ENCODE measurements at regions of chr17 and their contacts with region 1.

Region 1: DNA sequence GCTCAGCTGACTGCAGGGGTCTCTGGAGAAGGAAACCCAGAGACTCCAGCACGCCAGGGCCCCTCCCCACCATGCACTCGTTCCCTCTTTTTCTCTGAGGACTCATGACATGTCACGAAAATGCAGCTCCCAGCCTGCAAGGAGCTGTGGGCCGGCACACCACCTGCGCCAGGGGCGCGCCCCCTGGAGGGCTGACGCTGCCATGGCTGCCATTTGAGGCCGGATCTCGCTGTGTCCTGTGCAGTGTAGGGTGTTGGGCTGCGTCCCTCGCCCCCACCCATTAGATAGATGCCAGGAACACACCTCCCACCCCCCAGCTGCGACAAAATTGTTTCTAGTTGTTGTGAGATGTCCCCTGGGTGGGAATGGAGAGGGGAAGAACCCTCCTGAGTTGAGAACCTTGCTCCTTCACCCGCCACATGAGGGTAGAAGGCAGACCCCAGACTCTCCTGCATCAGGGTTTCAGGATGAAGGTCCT is 8.2 kb downstream of the SYNGR2 start:
- DNase-seq: no peak
- ATAC-seq: peak; percentile 68
- H3K4me3 ChIP-seq: no peak overlapping the region
- H3K27ac ChIP-seq: no peak overlapping the region
- H3K4me1 ChIP-seq: peaks cover 59% of the 10 kb centered on the region
- H3K27me3 ChIP-seq: no peaks in the 10 kb centered on the region
- CTCF ChIP-seq: peak; percentile 94 to 99 (median 99); a peak in 5 of 6 replicates
- EP300 ChIP-seq: no peak
- POLR2A ChIP-seq: peak; percentile 75
- RAD21 ChIP-seq: peak; percentile 82

Region 2: GRCh38 chr17:78112518-78113226 is 63.9 kb before region 1 on chr17:
- CTCF ChIA-PET with region 1: interaction called, 46 read pairs
- POLR2A ChIA-PET with region 1: interaction called, 6 read pairs
- RAD21 ChIA-PET with region 1: interaction called, 16 read pairs
- SMC1A ChIA-PET with region 1: interaction called, 10 read pairs
- in situ Hi-C with region 1: loop called (anchors 5 kb)
- intact Hi-C with region 1: loop called (anchors 1 kb)
- DNase-seq: no peak
- ATAC-seq: peak; percentile 84
- H3K4me3 ChIP-seq: no peak overlapping the region
- H3K27ac ChIP-seq: no peak overlapping the region; the same call in 1 of the 2 replicates
- H3K4me1 ChIP-seq: peaks cover 27% of the 10 kb centered on the region
- H3K27me3 ChIP-seq: no peaks in the 10 kb centered on the region
- CTCF ChIP-seq: peak; percentile 93 to 99 (median 96); a peak in 5 of 6 replicates
- EP300 ChIP-seq: no peak
- POLR2A ChIP-seq: peak; percentile 77
- RAD21 ChIP-seq: peak; percentile 96

Region 3: DNA sequence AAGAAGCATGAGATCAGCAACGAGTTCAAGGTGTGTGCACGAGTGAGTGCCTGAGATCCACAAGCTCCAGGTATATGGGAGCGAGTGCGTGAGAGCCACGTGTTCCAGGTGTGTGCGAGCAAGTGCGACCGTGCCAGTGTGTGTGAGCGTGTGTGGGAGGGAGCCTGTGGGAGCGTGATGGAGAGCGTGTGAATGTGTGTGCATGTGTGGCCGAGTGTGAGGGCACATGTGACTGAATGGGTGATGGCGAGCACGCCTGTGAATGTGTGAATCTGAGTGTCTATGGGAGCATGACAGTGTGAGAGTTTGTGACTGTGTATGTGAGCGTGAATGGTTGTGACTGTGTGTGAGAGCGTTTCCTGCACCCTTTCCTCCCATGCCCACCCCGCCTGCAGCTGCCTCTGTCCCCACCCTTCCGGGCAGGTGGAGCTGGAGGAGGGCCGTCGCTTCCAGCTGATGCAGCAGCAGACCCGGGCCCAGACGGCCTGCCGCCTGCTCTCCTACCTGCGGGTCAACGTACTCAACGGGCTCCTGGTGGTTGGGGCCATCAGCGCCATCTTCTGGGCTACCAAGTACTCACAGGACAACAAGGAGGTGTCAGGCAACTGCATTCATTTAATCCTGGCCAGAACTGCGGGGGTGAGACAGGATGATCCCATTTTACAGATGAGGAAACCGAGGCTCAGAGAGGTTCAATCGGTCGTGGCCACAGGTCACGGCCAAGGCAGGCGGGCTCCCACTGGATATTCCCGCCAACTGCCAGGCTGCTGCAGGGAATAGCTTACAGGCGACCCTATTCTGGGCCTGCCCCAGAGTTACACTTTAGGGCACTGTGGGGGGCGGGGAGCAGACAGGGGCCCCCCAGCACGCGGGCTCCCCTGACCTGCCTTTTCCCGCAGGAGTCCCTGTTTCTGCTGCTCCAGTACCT is 42.4 kb before region 1 on chr17:
- CTCF ChIA-PET with region 1: interaction called, 132 read pairs
- POLR2A ChIA-PET with region 1: interaction called, 85 read pairs
- RAD21 ChIA-PET with region 1: interaction called, 83 read pairs
- SMC1A ChIA-PET with region 1: interaction called, 51 read pairs
- in situ Hi-C with region 1: no loop called
- intact Hi-C with region 1: loop called (anchors 2 kb)
- DNase-seq: no peak
- ATAC-seq: peak; percentile 34
- H3K4me3 ChIP-seq: peak overlapping the region; percentile 94
- H3K27ac ChIP-seq: peak overlapping the region; percentile 93
- H3K4me1 ChIP-seq: peaks cover 64% of the 10 kb centered on the region
- H3K27me3 ChIP-seq: no peaks in the 10 kb centered on the region
- CTCF ChIP-seq: peak; percentile 76 to 78 (median 76)
- EP300 ChIP-seq: peak in 1 of 2 experiments; percentile 58; a peak in 1 of 4 replicates
- POLR2A ChIP-seq: peak; percentile 76
- RAD21 ChIP-seq: peak; percentile 75

Region 4: GRCh38 chr17:78154903-78155811 is 21.4 kb before region 1 on chr17:
- CTCF ChIA-PET with region 1: interaction called, 14 read pairs
- POLR2A ChIA-PET with region 1: interaction called, 20 read pairs
- RAD21 ChIA-PET with region 1: interaction called, 9 read pairs
- SMC1A ChIA-PET with region 1: interaction called, 20 read pairs
- in situ Hi-C with region 1: no loop called
- intact Hi-C with region 1: no loop called
- DNase-seq: peak; percentile 97
- ATAC-seq: peak; percentile 80
- H3K4me3 ChIP-seq: no peak overlapping the region
- H3K27ac ChIP-seq: peak overlapping the region; percentile 93
- H3K4me1 ChIP-seq: peaks cover 64% of the 10 kb centered on the region
- H3K27me3 ChIP-seq: no peaks in the 10 kb centered on the region
- CTCF ChIP-seq: no peak
- EP300 ChIP-seq: peak; percentile 61 to 88; a peak in 3 of 4 replicates
- POLR2A ChIP-seq: peak; percentile 76
- RAD21 ChIP-seq: no peak

Region 5: GRCh38 chr17:78214706-78215061 is 38.1 kb after region 1 on chr17:
- CTCF ChIA-PET with region 1: interaction called, 10 read pairs
- POLR2A ChIA-PET with region 1: interaction called, 4 read pairs
- RAD21 ChIA-PET with region 1: no interaction called
- SMC1A ChIA-PET with region 1: no interaction called
- in situ Hi-C with region 1: no loop called
- intact Hi-C with region 1: no loop called
- DNase-seq: no peak
- ATAC-seq: peak; percentile 6; the same call in 1 of the 3 replicates
- H3K4me3 ChIP-seq: peak overlapping the region; percentile 83
- H3K27ac ChIP-seq: peak overlapping the region; percentile 84
- H3K4me1 ChIP-seq: peaks cover 3% of the 10 kb centered on the region; the same call in 1 of the 2 replicates
- H3K27me3 ChIP-seq: no peaks in the 10 kb centered on the region
- CTCF ChIP-seq: no peak
- EP300 ChIP-seq: no peak
- POLR2A ChIP-seq: no peak
- RAD21 ChIP-seq: no peak

Measured in GM12878 (cell line).